ENCODE measurements at regions of chr6 and their contacts with region 1.

Region 1: DNA sequence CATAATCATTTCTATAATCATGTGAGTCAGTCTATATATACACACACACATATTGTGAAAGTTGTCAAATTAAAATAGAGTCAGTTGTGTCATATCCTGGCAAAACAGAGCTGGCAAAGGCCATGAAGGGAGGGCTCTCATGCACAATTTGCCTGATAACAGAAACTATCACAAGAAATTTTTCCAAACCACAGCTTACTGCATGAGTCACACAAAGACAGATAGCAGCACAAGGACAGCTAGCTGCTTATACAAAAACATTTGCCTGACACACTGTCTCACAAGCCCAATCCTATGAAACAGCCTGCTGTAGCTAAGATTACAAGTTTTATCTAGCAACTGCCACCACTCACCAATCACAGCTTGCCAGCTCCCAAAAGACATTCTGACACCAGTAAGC is 848.5 kb upstream of the MAN1A1 start:
- DNase-seq: no peak
- H3K4me3 ChIP-seq: no peak overlapping the region
- H3K27ac ChIP-seq: no peak overlapping the region
- H3K4me1 ChIP-seq: no peaks in the 10 kb centered on the region
- H3K27me3 ChIP-seq: no peaks in the 10 kb centered on the region
- CTCF ChIP-seq: no peak

Region 2: DNA sequence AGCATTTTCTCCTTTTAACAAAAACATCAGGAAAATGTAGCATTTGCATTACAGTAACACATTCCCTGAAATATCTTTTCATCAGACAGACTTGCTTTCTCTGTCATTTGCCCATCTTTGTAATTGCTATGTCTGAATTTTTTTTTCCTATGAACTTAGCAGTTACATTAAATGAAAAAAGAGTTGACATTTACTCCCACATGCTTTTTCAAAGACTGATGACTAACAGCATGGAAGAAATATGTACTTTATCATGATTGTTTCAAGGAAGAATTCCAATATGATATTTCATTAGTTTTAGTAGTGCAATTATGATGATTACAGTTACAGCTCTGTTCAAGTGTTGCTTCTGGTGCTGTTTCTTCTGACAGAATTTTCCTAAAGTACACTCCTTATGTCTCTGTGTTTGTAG is 16.1 kb after region 1 on chr6:
- CTCF ChIA-PET with region 1: no interaction called
- POLR2A ChIA-PET with region 1: interaction called, 11 read pairs
- intact Hi-C with region 1: no loop called
- DNase-seq: no peak
- H3K4me3 ChIP-seq: no peak overlapping the region
- H3K27ac ChIP-seq: no peak overlapping the region
- H3K4me1 ChIP-seq: no peaks in the 10 kb centered on the region
- H3K27me3 ChIP-seq: no peaks in the 10 kb centered on the region
- CTCF ChIP-seq: no peak

Measured in A673 (cell line).